Ovary (tissue), 10 donors: ENCODE measurements at regions of chr5 and their contacts with region 1.

Region 1: GRCh38 chr5:74919487-74919886 is 53.3 kb upstream of the FAM169A start:
- DNase-seq: no peak
- H3K4me3 ChIP-seq: no peak overlapping the region
- H3K27ac ChIP-seq: no peak overlapping the region
- H3K4me1 ChIP-seq: no peaks in the 10 kb centered on the region
- H3K27me3 ChIP-seq: no peaks in the 10 kb centered on the region
- CTCF ChIP-seq: peak in 1 of 3 donors; percentile 35
- EP300 ChIP-seq: no peak
- POLR2A ChIP-seq: no peak

Region 2: DNA sequence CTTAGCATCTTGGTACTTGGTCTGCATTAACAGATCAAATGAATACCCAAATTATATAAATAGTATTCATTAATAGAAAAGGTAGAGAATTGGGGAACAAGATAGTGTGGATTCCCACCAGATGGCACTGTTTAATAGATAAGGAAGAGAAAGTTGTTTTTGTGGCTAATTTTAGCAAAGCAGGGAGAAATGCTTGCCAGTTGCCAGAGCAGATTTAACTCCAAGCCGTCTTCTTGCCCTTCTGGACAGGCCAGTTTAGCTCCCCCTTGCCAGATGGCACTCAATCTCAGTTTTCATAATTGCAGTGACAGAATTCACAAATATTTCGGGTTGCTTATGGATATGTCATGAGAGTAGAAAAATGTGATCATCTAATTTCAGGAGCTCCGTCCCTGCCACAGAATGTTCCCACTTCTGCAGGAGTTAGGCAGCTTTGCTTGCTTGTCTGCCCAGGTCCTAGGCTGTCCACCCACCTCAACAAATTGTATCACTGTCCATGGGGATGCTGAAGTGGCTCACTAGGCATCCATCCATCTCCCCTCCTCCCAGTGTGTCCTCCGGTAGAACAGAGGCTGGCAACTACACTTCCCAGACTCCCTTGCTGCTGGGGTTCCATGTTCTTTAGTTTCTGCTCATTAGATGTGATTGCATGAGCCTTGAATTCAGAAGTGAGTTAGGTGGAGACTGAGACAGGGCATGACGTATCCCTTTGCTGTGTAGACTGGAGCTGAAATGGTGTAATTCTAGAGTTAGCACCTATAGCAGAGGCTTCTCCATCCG is 246.3 kb before region 1 on chr5:
- intact Hi-C with region 1: loop called in 2 of 4 experiments (anchors 10 kb)
- DNase-seq: no peak
- H3K4me3 ChIP-seq: peak overlapping the region; percentile 5
- H3K27ac ChIP-seq: no peak overlapping the region
- H3K4me1 ChIP-seq: no peaks in the 10 kb centered on the region
- H3K27me3 ChIP-seq: no peaks in the 10 kb centered on the region
- CTCF ChIP-seq: peak in 2 of 3 donors; percentile 12 to 44
- EP300 ChIP-seq: no peak
- POLR2A ChIP-seq: no peak

Region 3: DNA sequence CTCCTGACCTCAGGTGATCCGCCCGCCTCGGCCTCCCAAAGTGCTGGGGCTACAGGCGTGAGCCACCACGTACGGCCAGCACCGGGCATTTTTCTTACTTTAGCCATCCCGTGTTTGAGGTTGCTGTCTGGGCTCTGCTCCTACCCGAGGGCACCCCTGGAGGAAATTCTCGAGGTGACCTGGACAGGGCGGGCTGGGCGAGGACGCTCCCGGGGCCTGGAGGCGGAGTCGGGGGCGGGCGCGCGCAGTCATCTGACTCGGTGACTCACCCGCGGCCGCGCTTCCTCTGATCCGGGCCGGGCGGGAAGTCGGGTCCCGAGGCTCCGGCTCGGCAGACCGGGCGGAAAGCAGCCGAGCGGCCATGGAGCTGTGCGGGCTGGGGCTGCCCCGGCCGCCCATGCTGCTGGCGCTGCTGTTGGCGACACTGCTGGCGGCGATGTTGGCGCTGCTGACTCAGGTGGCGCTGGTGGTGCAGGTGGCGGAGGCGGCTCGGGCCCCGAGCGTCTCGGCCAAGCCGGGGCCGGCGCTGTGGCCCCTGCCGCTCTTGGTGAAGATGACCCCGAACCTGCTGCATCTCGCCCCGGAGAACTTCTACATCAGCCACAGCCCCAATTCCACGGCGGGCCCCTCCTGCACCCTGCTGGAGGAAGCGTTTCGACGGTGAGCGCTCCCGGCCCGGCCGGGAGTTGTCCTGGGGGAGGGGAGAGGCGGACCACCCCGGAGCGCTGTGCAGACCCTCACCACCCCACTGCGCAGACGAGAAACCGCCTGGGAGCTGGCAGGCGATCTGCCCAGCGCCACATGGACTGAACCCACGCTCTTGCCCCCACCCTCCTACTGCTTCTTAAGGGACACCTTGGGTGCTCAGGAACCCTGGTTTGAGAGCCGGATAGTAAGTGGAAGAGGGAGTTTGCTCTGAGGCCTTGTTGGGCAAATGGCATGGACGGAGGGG is 234.3 kb before region 1 on chr5 and contains the start of gene HEXB:
- intact Hi-C with region 1: loop called in 1 of 4 experiments (anchors 10 kb)
- DNase-seq: peak; percentile 88 to 92 (median 90)
- H3K4me3 ChIP-seq: peak within 1 kb of the TSS; percentile 90
- H3K27ac ChIP-seq: peak within 1 kb of the TSS; percentile 33 to 81
- H3K4me1 ChIP-seq: peaks cover 6% of the 10 kb centered on the region
- H3K27me3 ChIP-seq: no peaks in the 10 kb centered on the region
- CTCF ChIP-seq: peak in 1 of 3 donors; percentile 21
- EP300 ChIP-seq: no peak
- POLR2A ChIP-seq: peak; percentile 81
- total RNA-seq, gene HEXB: 63.5 to 99.3 (median 88.6) TPM